ENCODE measurements at regions of chr11 and their contacts with region 1.

Region 1: DNA sequence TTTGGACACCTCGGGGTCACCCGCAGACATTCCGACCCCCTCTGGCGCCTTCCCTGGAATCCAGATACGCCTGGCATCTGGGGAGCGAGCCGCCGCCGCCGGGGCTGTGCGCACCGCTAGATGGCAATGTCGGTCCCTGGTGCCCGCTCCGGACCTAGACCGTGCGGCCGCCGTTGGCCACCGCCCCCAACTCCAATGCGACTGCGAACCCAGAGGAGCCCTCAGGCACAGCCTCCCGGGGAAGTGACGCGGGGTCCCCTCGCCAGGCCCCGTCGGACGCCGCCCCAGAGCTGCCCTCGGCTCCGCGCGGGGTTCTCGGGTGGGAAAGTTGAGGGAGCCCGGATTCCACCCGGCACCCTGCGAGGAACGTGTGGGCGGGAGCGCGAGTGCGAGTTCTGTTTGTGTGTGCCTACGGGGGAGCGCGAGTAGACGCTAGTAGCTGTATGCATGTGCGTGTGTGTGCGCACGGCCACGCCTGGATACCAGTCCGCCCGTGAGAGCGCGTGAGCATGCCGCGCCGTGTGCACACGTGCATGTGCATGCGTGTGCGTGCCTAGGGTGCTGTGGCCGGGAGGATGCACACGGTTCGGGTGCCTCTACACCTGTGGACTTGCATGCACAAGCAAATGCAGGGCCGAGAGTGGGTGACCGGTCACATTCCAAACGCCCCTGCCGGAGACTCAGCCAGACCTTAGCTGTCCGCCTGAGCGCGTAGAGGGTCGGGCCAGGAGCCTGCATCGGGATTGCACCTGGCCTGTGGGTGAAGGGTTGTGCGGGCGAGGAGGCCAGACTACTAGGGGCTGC is 1.9 kb downstream of the CHRM4 start:
- DNase-seq: peak; percentile 78

Region 2: DNA sequence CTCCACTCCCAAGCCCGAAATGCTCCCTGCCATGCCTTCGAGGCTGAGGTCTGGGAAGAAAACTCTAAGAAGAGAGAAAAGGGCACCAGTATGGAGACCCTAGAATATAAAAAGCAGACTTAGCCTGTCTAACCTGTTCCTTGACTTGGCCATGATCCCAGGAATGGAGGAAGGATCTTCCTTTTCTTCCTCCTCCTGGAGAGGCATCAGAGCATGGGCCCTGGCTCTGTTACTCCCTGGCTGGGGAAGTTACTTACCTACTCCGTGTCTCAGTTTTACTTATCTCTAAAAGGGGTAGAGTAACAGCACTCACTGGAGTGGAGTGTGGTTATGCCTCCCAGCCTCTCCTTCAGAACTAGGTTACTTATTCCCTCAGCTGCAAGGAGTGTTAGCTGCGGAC is 213.2 kb before region 1 on chr11:
- in situ Hi-C with region 1: no loop called
- DNase-seq: no peak

Region 3: GRCh38 chr11:46315033-46315738 is 74.5 kb before region 1 on chr11:
- in situ Hi-C with region 1: no loop called
- DNase-seq: peak; percentile 82

Region 4: DNA sequence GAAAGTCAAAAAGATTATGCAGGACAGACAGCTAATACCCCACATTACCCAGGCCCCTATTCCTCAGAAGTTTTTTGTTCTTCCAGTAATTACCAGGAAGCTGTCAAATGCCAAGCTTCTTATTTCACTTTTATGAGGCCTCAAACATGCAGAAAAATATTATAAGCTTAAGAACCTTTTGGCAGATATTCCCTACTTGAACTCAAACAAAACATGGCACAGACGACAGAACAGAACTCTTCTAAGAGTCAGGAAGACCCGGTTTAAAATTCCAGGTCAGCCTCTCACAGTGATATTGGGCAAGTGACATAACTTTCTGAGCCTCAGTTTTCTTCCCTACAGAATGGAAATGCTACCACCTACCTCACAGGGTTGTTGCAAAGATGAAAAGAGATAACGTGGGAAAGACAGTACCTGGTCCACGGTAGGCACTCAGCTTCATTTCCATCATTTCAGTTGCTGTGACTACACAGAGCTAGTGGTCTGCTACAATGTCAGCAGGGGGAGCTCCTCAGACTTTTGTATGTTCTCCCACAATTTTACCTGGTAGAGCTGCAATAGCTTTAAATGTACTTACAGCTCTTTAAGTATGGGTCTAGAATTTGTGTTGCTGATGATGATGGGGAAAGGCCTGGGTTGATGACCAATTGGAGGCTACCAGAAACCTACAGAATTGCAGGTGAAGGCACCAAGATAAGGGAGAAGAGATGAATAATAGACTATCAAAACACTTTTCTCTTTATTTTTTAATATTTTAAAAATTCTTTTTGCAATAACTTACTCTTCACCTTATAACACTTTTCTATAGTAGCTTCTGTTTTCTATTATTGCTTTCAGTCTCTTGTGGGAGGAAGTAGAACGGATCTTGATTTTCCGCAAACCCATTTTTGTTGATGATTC is 100.3 kb after region 1 on chr11:
- in situ Hi-C with region 1: no loop called
- DNase-seq: no peak

Region 5: GRCh38 chr11:46570790-46571398 is 181.2 kb after region 1 on chr11:
- in situ Hi-C with region 1: loop called (anchors 10 kb)
- DNase-seq: no peak

Region 6: GRCh38 chr11:46808799-46809431 is 419.3 kb after region 1 on chr11:
- in situ Hi-C with region 1: no loop called
- DNase-seq: peak; percentile 54

Measured in KBM-7 (cell line).